ENCODE measurements at regions of chr7 and their contacts with region 1.

Region 1: DNA sequence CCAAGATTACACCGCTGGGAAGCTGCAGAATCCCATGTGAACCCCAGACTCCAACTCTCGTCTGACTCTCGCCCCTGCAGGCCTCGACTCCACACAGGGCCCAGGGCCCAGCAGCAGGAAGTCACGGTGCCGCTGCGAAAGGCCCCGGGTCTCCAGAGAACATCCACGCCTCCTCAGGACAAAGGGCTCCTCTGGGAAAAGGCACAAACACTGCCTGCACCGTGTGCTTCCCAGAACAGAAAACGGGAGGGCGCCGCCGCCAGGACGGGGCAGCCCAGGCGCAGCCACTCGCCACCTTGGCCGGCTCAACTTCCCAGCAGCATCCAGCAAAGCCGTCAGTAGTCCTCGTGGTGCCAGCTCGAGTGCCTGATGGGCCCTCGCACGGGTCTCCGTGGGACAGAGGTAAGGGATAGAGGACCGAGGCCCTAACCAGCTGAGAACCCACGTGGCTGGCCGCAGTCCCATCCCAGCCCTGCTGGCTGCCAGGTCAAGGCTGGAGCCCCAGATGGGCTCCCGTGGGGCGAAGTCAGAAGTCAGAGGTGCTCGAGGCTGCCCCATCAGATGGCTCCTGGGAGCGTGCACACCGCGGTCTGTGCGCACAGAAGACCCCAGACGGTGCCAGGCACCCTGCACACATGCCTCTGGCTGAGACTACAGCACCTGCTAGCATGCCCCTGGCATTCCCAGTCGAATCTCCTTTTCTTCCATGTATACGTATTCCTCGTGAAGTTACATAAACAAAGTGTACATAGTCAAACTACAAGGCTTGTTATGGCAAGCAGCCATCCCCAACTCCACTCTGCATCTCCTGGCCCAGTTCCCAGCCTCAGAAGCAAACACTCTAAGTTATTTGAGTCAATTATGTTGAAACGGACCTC is 60.2 kb downstream of the MAD1L1 start:
- DNase-seq: no peak
- H3K4me3 ChIP-seq: no peak overlapping the region
- H3K4me3 Mint-ChIP-seq: no peak overlapping the region
- H3K27ac Mint-ChIP-seq: no peak overlapping the region
- H3K4me1 ChIP-seq: peaks cover 6% of the 10 kb centered on the region; the same call in 1 of the 2 replicates
- H3K4me1 Mint-ChIP-seq: peaks cover 7% of the 10 kb centered on the region
- H3K27me3 ChIP-seq: no peaks in the 10 kb centered on the region
- H3K27me3 Mint-ChIP-seq: no peaks in the 10 kb centered on the region
- CTCF ChIP-seq: no peak

Region 2: DNA sequence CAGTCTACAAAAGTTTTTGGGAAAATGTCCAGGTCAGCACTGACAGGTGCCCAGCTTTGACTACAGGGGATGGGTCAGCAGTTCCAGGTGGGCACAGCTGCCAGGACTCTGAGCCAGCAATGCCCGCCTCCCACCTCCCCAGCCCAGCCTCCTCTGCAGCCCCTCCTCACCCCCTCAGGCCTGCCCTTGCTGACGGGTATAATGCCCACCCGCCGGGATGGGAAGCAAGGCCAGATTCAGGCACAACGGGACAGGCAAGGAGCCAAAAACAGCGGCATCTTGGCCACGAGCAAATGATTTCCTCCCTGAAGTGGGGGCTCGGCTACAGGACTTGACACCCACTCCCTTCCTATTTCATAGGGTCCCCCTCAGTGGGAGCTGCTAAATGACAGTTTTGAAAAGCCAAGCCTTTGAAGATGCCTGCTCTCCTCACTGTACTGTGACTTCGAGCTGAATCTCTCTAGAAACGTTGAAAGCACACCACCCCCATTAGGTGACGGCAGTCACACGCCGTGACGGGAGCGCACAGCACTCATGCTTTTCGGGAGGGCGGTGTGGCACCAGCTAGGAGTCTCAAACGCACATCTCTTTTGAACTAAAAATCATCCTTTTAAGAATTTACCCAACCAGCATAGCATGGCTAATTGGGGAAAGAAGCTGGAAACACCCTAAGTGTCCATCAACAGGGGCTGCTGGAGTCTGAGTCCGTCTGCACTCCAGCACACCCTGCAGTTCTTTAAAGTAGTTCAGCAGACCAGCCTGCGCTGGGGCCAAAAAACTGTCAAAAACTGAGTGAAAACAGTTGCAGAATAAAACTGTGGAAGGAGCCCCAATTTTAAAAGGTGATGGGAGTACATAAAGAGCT is 30.6 kb after region 1 on chr7:
- CTCF ChIA-PET with region 1: no interaction called
- POLR2A ChIA-PET with region 1: no interaction called
- intact Hi-C with region 1: loop called (anchors 1 kb)
- DNase-seq: peak in 1 of 2 experiments; percentile 9
- H3K4me3 ChIP-seq: no peak overlapping the region
- H3K4me3 Mint-ChIP-seq: no peak overlapping the region
- H3K27ac Mint-ChIP-seq: no peak overlapping the region
- H3K4me1 ChIP-seq: peaks cover 17% of the 10 kb centered on the region
- H3K4me1 Mint-ChIP-seq: peaks cover 9% of the 10 kb centered on the region
- H3K27me3 ChIP-seq: no peaks in the 10 kb centered on the region
- H3K27me3 Mint-ChIP-seq: no peaks in the 10 kb centered on the region
- CTCF ChIP-seq: no peak

Measured in Caco-2 (cell line).